ENCODE measurements at regions of chr1 and their contacts with region 1.

Region 1: DNA sequence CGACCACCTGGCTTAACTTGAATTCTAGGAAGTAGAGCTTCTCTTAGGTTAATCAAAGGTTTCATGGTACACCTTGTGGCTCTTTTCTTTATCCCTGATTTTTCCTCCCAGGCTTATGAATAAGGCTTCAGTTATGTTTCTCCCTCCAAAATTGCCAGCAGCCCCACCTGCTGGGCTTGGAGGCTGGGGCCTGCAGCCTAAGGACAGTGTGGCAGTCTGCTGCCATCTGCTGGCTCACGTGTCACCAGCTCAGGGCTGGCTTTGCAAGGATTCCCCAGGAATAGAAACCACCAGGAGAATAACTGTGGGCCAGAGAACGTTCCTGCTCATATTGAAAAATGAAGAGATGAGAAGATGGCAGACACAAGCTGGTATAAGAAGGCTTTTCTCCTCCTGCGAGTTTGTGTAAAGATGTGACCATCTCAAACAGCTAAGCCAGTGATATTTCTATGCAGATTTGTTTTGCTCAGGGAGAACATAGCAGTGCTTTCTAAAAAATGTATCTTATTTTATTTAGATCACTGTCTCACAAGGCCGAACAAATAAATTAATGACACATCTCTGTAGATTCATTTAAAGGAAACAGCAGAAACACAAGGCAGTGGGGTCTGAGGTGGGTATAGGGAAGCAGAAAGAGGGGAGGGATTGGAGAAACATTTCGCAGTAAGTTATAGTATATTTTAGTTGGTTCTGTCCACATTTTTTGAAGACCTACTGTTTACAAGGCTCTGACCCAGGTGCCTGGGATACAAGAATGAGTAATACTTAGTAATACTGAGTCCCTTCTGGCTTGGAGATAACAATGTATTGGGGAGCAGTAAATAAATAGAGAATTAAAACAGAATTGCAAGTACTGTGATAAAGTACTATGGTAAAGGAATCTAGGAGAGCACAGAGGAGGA is 291.1 kb upstream of the SGIP1 start:
- DNase-seq: peak; percentile 87
- H3K4me3 Mint-ChIP-seq: no peak overlapping the region
- H3K27ac Mint-ChIP-seq: no peak overlapping the region
- H3K4me1 Mint-ChIP-seq: peaks cover 30% of the 10 kb centered on the region
- H3K27me3 Mint-ChIP-seq: peaks cover 6% of the 10 kb centered on the region

Region 2: DNA sequence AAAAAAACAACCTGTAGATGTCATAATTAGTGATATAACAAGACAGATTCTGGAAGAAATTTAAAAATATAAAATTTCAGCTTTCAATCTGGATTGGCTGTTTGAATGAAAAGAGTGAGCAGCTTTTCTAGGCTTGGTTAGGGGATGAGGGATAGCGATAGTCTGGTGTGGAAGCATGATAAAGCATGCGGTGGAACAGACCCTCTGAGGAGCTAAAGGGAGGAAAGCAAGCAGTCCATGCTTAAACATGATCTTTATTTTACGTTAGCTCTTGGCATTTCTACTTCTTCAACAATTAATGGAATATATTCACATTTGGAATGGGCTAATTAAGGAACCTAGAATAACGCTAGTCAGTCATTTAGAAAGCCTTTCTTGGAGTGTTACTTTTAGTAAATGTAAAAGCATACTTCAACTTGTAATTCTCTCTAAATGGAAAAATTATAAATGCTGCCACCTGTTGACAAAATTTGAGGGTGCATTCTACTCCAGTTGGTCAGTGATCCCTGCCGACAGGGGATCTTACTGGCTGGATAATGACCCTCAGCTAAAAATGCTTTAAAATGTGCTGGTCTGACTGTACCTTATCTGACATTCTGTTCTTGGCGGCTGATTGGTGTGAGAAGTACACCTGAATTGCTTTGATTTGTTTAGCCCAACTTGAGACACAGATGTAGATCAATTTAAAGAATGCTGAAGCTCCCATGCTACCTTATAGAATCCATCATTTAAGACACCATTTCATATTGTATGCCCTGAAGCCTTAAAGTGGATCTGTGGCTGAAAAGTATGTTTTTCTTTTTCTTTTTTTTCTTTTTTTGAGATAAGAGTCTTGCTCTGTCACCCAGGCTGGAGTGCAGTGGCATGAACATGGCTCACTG is 1033.7 kb before region 1 on chr1:
- CTCF ChIA-PET with region 1: no interaction called
- intact Hi-C with region 1: loop called (anchors 5 kb)
- DNase-seq: peak; percentile 28
- H3K4me3 Mint-ChIP-seq: no peak overlapping the region
- H3K27ac Mint-ChIP-seq: no peak overlapping the region
- H3K4me1 Mint-ChIP-seq: peaks cover 23% of the 10 kb centered on the region
- H3K27me3 Mint-ChIP-seq: peaks cover 3% of the 10 kb centered on the region

Region 3: GRCh38 chr1:65812065-65812464 is 430.8 kb before region 1 on chr1:
- CTCF ChIA-PET with region 1: no interaction called
- intact Hi-C with region 1: loop called (anchors 1 kb)
- DNase-seq: peak; percentile 78
- H3K4me3 Mint-ChIP-seq: no peak overlapping the region
- H3K27ac Mint-ChIP-seq: peak overlapping the region; percentile 36
- H3K4me1 Mint-ChIP-seq: peaks cover 12% of the 10 kb centered on the region
- H3K27me3 Mint-ChIP-seq: peaks cover 31% of the 10 kb centered on the region

Region 4: GRCh38 chr1:66088787-66089186 is 154.1 kb before region 1 on chr1:
- CTCF ChIA-PET with region 1: interaction called, 4 read pairs
- intact Hi-C with region 1: loop called (anchors 2 kb)
- DNase-seq: no peak
- H3K4me3 Mint-ChIP-seq: no peak overlapping the region
- H3K27ac Mint-ChIP-seq: no peak overlapping the region
- H3K4me1 Mint-ChIP-seq: peaks cover 3% of the 10 kb centered on the region
- H3K27me3 Mint-ChIP-seq: peaks cover 9% of the 10 kb centered on the region

Region 5: GRCh38 chr1:66231217-66231616 is 11.7 kb before region 1 on chr1:
- CTCF ChIA-PET with region 1: interaction called, 37 read pairs
- intact Hi-C with region 1: loop called (anchors 1 kb)
- DNase-seq: no peak
- H3K4me3 Mint-ChIP-seq: no peak overlapping the region
- H3K27ac Mint-ChIP-seq: peak overlapping the region; percentile 5
- H3K4me1 Mint-ChIP-seq: peaks cover 11% of the 10 kb centered on the region
- H3K27me3 Mint-ChIP-seq: peaks cover 4% of the 10 kb centered on the region

Region 6: GRCh38 chr1:66300972-66301451 is 58.1 kb after region 1 on chr1:
- CTCF ChIA-PET with region 1: no interaction called
- intact Hi-C with region 1: loop called (anchors 1 kb)
- DNase-seq: peak; percentile 54
- H3K4me3 Mint-ChIP-seq: peak overlapping the region; percentile 40
- H3K27ac Mint-ChIP-seq: peak overlapping the region; percentile 69
- H3K4me1 Mint-ChIP-seq: peaks cover 38% of the 10 kb centered on the region
- H3K27me3 Mint-ChIP-seq: no peaks in the 10 kb centered on the region

Region 7: DNA sequence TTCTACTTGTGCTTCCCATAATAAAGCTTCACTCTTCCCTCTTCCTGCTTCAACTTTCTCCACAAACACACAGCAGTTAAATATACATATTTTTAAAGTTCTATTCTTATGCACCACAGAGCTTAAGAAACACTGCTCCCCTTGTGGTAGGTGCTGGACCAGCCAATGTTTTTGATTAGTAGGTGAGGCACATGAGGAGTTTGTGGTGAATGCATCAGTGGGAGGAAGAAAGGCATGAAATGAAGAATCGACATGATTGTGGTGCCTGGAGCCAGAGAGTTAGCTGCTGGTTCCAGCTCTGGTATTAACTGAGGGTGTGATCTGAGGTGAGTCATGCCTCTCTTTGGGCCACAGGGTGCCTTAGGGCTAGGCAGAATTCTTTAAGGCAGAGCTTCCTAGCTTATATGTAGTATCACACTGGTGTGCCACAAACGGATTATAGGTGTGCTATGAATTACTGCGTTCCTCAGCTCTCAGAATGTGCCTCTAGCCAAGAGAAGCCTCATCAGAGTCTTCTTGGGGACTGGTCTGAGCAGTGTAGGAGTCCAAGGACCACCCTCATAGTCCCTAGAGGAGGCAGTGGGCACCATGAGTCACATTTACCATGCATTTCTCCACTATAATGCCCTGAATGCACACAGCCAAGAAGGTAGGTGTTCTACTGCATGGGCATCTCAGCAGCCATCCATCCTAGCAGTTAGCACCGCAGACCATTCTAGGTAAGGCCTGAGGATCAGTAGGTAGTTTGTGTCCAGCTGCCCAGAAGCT is 193.7 kb after region 1 on chr1:
- CTCF ChIA-PET with region 1: interaction called, 474 read pairs
- intact Hi-C with region 1: loop called (anchors 1 kb)
- DNase-seq: peak; percentile 81
- H3K4me3 Mint-ChIP-seq: no peak overlapping the region
- H3K27ac Mint-ChIP-seq: no peak overlapping the region
- H3K4me1 Mint-ChIP-seq: peaks cover 40% of the 10 kb centered on the region
- H3K27me3 Mint-ChIP-seq: peaks cover 2% of the 10 kb centered on the region

Region 8: DNA sequence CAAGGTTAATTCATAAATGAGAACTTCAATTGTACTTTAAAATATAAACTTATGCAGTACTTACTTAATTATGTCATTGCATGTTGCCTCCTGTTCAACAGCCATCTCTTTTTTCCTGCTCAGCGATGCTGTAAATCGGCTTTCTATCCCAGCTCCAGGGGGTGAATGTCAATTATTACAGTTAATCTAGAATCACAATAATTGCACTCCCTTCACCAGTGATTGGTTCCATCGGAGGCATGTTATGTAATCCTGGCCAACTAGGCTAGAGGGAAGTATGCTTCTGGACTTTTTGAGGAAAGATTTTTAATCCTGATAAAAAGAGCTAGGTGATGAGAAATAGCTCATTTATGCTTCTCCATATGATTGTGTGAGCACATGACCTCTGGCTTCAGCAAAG is 237.3 kb after region 1 on chr1:
- CTCF ChIA-PET with region 1: no interaction called
- intact Hi-C with region 1: no loop called
- DNase-seq: no peak
- H3K4me3 Mint-ChIP-seq: no peak overlapping the region
- H3K27ac Mint-ChIP-seq: no peak overlapping the region
- H3K4me1 Mint-ChIP-seq: no peaks in the 10 kb centered on the region
- H3K27me3 Mint-ChIP-seq: peaks cover 14% of the 10 kb centered on the region

Measured in activated naive CD4-positive, alpha-beta T cell treated with anti-CD3 and anti-CD28 coated beads for 36 hours (primary cell).